PC-3 (cell line): ENCODE measurements at regions of chr3 and their contacts with region 1.

Region 1: GRCh38 chr3:71583566-71584449 is at the start of gene FOXP1:
- DNase-seq: peak; percentile 74
- ATAC-seq: peak; percentile 35
- H3K4me3 ChIP-seq: peak within 1 kb of the TSS; percentile 91
- H3K27ac ChIP-seq: peak within 1 kb of the TSS; percentile 58
- H3K4me1 ChIP-seq: peaks cover 41% of the 10 kb centered on the region
- H3K27me3 ChIP-seq: no peaks in the 10 kb centered on the region
- CTCF ChIP-seq: no peak
- total RNA-seq, gene FOXP1: 35.3 and 36.0 TPM in 2 replicates

Region 2: DNA sequence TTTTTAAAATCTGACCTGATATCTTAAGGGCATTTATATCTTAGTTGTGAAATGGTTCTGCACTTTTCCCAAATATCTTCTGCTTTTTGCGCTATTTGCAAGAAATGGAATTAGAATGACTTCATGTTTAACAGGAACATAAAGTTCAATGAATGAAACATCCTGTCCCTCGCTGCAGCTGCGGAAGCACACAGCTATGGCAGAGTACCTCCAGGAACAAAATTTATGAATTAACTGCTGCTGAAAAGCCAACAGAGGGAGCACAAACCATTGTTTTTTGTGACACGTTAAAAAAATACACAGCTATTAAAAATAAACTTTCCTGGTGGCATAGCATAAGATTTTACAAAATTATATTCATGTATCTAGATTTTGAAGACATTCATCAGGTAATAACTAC is 867.0 kb before region 1 on chr3:
- CTCF ChIA-PET with region 1: no interaction called
- POLR2A ChIA-PET with region 1: no interaction called
- intact Hi-C with region 1: loop called (anchors 1 kb)
- DNase-seq: peak; percentile 55
- ATAC-seq: peak; percentile 88
- H3K4me3 ChIP-seq: no peak overlapping the region
- H3K27ac ChIP-seq: no peak overlapping the region
- H3K4me1 ChIP-seq: no peaks in the 10 kb centered on the region
- H3K27me3 ChIP-seq: no peaks in the 10 kb centered on the region
- CTCF ChIP-seq: peak; percentile 75

Region 3: DNA sequence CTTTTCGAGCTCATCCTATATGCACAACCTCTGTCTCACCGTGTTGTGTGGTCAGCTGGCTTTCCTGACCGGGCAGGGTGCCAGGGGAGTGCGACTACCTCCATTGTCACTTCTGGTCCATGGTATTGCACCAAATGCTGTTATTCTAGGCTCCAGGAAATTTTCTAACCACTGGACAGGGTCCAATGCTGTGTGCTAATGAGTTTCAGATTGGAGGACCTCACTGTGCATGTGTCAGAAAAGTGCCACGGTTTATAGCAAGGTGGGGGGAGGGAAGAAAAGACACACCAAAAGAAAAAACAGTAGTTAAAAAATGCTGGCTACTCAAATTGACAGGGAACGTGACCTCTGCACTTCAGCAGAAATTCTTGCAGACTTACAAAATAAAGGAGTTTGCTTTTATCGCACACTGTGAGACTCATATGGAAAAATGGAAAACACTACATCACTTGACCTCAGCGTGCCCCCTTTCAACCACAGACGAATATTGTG is 480.3 kb before region 1 on chr3:
- CTCF ChIA-PET with region 1: no interaction called
- POLR2A ChIA-PET with region 1: no interaction called
- intact Hi-C with region 1: loop called (anchors 10 kb)
- DNase-seq: peak; percentile 79
- ATAC-seq: peak; percentile 7
- H3K4me3 ChIP-seq: no peak overlapping the region
- H3K27ac ChIP-seq: peak overlapping the region; percentile 74
- H3K4me1 ChIP-seq: peaks cover 54% of the 10 kb centered on the region
- H3K27me3 ChIP-seq: no peaks in the 10 kb centered on the region
- CTCF ChIP-seq: no peak

Region 4: GRCh38 chr3:71258116-71258515 is 325.7 kb before region 1 on chr3:
- CTCF ChIA-PET with region 1: no interaction called
- POLR2A ChIA-PET with region 1: interaction called, 3 read pairs
- intact Hi-C with region 1: loop called (anchors 5 kb)
- DNase-seq: peak; percentile 86
- ATAC-seq: peak; percentile 88
- H3K4me3 ChIP-seq: no peak overlapping the region
- H3K27ac ChIP-seq: peak overlapping the region; percentile 47
- H3K4me1 ChIP-seq: peaks cover 32% of the 10 kb centered on the region
- H3K27me3 ChIP-seq: no peaks in the 10 kb centered on the region
- CTCF ChIP-seq: no peak

Region 5: GRCh38 chr3:71444028-71444860 is 139.6 kb before region 1 on chr3:
- CTCF ChIA-PET with region 1: no interaction called
- POLR2A ChIA-PET with region 1: no interaction called
- intact Hi-C with region 1: loop called (anchors 1 kb)
- DNase-seq: peak; percentile 91
- ATAC-seq: peak; percentile 89
- H3K4me3 ChIP-seq: peak overlapping the region; percentile 14; the same call in 1 of the 2 replicates
- H3K27ac ChIP-seq: peak overlapping the region; percentile 82
- H3K4me1 ChIP-seq: peaks cover 22% of the 10 kb centered on the region
- H3K27me3 ChIP-seq: no peaks in the 10 kb centered on the region
- CTCF ChIP-seq: no peak

Region 6: DNA sequence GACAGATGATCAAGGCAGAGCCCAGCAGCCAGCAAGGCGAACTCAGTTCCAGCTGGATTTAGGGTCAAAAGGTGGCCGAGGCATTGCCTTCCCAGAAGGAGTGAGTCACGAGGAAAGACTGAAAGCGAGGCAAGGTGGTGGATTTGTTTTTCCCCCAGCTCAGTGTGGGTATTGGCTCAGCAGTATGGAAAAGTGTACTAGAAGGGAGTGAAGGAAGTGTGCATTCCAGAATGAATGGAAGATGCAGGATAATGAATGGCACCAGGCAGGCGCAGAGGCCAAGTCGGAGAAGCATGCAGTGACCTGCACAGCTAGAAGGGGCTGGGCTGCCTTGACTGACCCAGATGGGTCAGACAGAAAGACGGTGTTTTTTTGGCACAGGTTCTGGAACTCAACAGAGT is 46.6 kb before region 1 on chr3:
- CTCF ChIA-PET with region 1: no interaction called
- POLR2A ChIA-PET with region 1: no interaction called
- intact Hi-C with region 1: loop called (anchors 1 kb)
- DNase-seq: peak; percentile 78
- ATAC-seq: peak; percentile 3; the same call in 1 of the 2 replicates
- H3K4me3 ChIP-seq: no peak overlapping the region
- H3K27ac ChIP-seq: peak overlapping the region; percentile 23
- H3K4me1 ChIP-seq: peaks cover 52% of the 10 kb centered on the region
- H3K27me3 ChIP-seq: no peaks in the 10 kb centered on the region
- CTCF ChIP-seq: no peak

Region 7: DNA sequence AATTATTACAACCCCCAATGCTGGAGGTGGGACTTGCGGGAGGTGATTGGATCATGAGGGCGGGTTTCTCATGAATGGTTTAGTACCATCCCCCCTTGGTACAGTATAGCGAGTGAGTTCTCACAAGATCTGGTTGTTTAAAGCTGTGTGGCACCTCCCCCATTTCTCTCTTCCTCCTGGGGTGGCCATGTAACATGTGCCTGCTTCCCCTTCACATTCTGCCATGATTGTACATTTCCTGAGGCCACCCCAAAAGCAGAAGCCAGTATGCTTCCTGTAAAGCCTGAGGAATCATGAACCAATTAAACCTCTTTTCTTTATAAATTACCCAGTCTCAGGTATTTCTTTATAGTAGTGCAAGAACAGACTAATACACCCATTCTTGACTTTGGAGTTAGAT is 221.4 kb after region 1 on chr3:
- CTCF ChIA-PET with region 1: no interaction called
- POLR2A ChIA-PET with region 1: no interaction called
- intact Hi-C with region 1: no loop called
- DNase-seq: no peak
- ATAC-seq: no peak
- H3K4me3 ChIP-seq: no peak overlapping the region
- H3K27ac ChIP-seq: no peak overlapping the region
- H3K4me1 ChIP-seq: no peaks in the 10 kb centered on the region
- H3K27me3 ChIP-seq: peaks cover 63% of the 10 kb centered on the region
- CTCF ChIP-seq: no peak

Region 8: GRCh38 chr3:71846185-71846584 is 262.4 kb after region 1 on chr3:
- CTCF ChIA-PET with region 1: no interaction called
- POLR2A ChIA-PET with region 1: no interaction called
- intact Hi-C with region 1: no loop called
- DNase-seq: no peak
- ATAC-seq: no peak
- H3K4me3 ChIP-seq: no peak overlapping the region
- H3K27ac ChIP-seq: no peak overlapping the region
- H3K4me1 ChIP-seq: no peaks in the 10 kb centered on the region
- H3K27me3 ChIP-seq: peaks cover 48% of the 10 kb centered on the region
- CTCF ChIP-seq: no peak

Region 9: DNA sequence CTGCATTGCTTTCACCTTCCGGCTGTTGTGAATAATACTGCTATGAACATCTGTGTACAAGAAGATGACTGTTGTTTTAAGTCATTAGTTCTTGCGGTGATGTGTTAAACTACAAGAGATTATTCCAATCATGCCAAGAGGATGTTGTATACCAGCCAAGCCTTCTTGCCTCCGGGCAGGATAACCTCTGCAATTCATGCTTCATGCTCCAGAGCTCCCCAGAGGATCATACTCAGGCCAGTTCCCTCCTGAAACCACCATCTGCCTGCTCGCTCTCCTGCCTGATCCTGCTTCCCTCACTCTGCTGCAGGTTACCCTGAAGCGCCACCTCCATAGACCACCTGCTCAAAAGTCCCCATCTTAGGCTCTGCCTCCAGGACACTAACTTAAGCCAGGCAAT is 388.2 kb after region 1 on chr3:
- CTCF ChIA-PET with region 1: no interaction called
- POLR2A ChIA-PET with region 1: no interaction called
- intact Hi-C with region 1: no loop called
- DNase-seq: peak; percentile 67
- ATAC-seq: no peak
- H3K4me3 ChIP-seq: no peak overlapping the region
- H3K27ac ChIP-seq: no peak overlapping the region
- H3K4me1 ChIP-seq: peaks cover 3% of the 10 kb centered on the region; the same call in 1 of the 2 replicates
- H3K27me3 ChIP-seq: peaks cover 73% of the 10 kb centered on the region
- CTCF ChIP-seq: no peak